Heart right ventricle (tissue), 16 donors: ENCODE measurements at regions of chr6 and their contacts with region 1.

Region 1: DNA sequence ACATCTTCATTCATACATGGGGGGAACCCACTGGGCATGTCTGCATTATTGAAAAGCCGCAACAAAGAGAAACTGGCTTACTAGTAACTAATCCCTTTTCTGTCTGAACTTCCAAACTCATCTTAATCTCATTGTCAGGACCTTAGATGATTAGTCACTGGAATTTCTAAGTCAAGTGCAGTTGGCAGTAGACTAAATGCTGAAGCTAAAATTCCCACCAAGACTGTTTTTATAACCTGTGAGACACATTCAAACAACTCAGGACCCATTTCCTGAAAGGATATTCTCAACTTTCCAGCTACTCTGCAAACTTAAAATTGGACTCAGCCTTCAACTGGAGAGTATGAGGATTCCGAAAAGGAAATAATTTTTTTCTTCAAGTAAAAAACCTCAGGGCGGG is 94.8 kb upstream of the SCAF8 start:
- DNase-seq: no peak
- ATAC-seq: peak in 4 of 8 donors; percentile 17 to 58 (median 38)
- H3K4me3 ChIP-seq: no peak overlapping the region
- H3K27ac ChIP-seq: no peak overlapping the region
- H3K4me1 ChIP-seq: peaks cover 0 to 5% (median 0%) of the 10 kb centered on the region in 9 donors
- H3K27me3 ChIP-seq: no peaks in the 10 kb centered on the region
- CTCF ChIP-seq: no peak

Region 2: GRCh38 chr6:154602708-154603107 is 35.7 kb before region 1 on chr6:
- intact Hi-C with region 1: loop called in 1 of 10 experiments (anchors 2 kb)
- DNase-seq: no peak
- ATAC-seq: no peak
- H3K4me3 ChIP-seq: no peak overlapping the region
- H3K27ac ChIP-seq: no peak overlapping the region
- H3K4me1 ChIP-seq: peaks cover 0 to 3% (median 0%) of the 10 kb centered on the region in 9 donors
- H3K27me3 ChIP-seq: no peaks in the 10 kb centered on the region
- CTCF ChIP-seq: no peak